CD4-positive, alpha-beta T cell (primary cell): ENCODE measurements at regions of chr19 and their contacts with region 1.

Region 1: GRCh38 chr19:3479177-3479833 is 1.0 kb downstream of the SMIM24 start:
- DNase-seq: peak in 10 of 14 experiments; percentile 22 to 83 (median 44)
- ATAC-seq: peak; percentile 74
- H3K4me3 ChIP-seq: no peak overlapping the region
- H3K4me3 Mint-ChIP-seq: no peak overlapping the region
- H3K27ac ChIP-seq: no peak overlapping the region
- H3K27ac Mint-ChIP-seq: no peak overlapping the region
- H3K4me1 ChIP-seq: peaks cover 17% of the 10 kb centered on the region
- H3K4me1 Mint-ChIP-seq: peaks cover 17% of the 10 kb centered on the region
- H3K27me3 ChIP-seq: no peaks in the 10 kb centered on the region
- H3K27me3 Mint-ChIP-seq: peaks cover 4% of the 10 kb centered on the region
- CTCF ChIP-seq: no peak

Region 2: GRCh38 chr19:3500429-3501130 is 21.3 kb after region 1 on chr19 and contains the start of gene DOHH:
- CTCF ChIA-PET with region 1: no interaction called
- POLR2A ChIA-PET with region 1: interaction called, 10 read pairs
- intact Hi-C with region 1: no loop called
- DNase-seq: peak; percentile 93 to 98 (median 95)
- ATAC-seq: peak; percentile 85
- H3K4me3 ChIP-seq: peak within 1 kb of the TSS; percentile 98
- H3K4me3 Mint-ChIP-seq: peak within 1 kb of the TSS; percentile 84
- H3K27ac ChIP-seq: peak within 1 kb of the TSS; percentile 85 to 97
- H3K27ac Mint-ChIP-seq: peak within 1 kb of the TSS; percentile 85
- H3K4me1 ChIP-seq: peaks cover 41% of the 10 kb centered on the region
- H3K4me1 Mint-ChIP-seq: peaks cover 31% of the 10 kb centered on the region
- H3K27me3 ChIP-seq: no peaks in the 10 kb centered on the region
- H3K27me3 Mint-ChIP-seq: no peaks in the 10 kb centered on the region
- CTCF ChIP-seq: no peak
- total RNA-seq, gene DOHH: 3.9 to 4.7 TPM